ENCODE measurements at regions of chr6 and their contacts with region 1.

Region 1: DNA sequence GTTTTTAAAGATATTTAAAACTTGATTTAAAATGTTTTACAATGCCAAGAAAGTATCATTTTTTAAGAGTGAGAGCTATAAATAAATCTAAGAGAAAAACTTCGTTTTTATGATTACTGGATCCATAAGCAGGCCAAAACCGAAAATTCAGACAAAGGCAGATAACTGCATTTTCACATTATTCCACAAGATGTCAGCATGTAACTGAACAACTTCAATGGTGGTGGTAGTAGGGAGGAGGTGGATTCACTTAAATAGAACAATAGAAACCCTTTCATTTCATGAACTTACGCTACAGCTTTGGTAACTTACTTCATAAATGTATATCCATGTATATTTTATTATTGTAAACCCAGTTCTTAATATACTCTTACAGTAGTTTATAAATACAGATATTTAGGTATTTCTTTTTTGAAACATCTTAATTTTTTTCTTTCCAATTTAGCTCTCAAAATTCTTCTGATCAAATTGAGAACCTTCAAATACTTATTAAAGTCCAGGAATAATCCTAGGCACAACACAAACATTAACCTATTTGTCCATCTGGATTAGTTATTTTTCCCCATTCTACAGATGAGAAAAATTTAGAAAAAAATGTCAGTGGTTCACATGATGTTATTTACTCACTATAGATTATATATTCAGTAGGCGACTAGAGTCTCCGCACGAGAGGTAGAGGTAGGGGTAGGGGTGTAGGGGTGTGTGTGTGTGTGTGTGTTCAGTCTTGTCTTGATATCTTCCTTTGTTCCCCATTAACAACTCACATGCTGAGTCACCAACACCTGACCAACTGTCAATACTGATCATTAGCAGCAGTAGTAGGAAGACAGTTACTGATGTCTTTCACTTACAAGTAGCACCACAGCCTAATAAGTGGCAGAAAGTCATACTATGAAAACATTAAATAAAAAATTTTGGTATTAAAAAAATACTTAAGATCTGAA is 111.5 kb downstream of the ARHGAP18 start:
- DNase-seq: peak in 4 of 14 experiments; percentile 8 to 84 (median 80)
- ATAC-seq: peak; percentile 98
- H3K4me3 ChIP-seq: no peak overlapping the region
- H3K4me3 Mint-ChIP-seq: no peak overlapping the region
- H3K27ac ChIP-seq: no peak overlapping the region
- H3K27ac Mint-ChIP-seq: no peak overlapping the region
- H3K4me1 ChIP-seq: no peaks in the 10 kb centered on the region
- H3K4me1 Mint-ChIP-seq: no peaks in the 10 kb centered on the region
- H3K27me3 ChIP-seq: no peaks in the 10 kb centered on the region
- H3K27me3 Mint-ChIP-seq: no peaks in the 10 kb centered on the region
- CTCF ChIP-seq: peak; percentile 90

Region 2: GRCh38 chr6:129730477-129731165 is 132.1 kb after region 1 on chr6:
- CTCF ChIA-PET with region 1: interaction called, 55 read pairs
- POLR2A ChIA-PET with region 1: interaction called, 11 read pairs
- intact Hi-C with region 1: loop called (anchors 1 kb)
- DNase-seq: peak in 7 of 14 experiments; percentile 7 to 73 (median 54)
- ATAC-seq: peak; percentile 60
- H3K4me3 ChIP-seq: no peak overlapping the region
- H3K4me3 Mint-ChIP-seq: no peak overlapping the region
- H3K27ac ChIP-seq: no peak overlapping the region
- H3K27ac Mint-ChIP-seq: no peak overlapping the region
- H3K4me1 ChIP-seq: no peaks in the 10 kb centered on the region
- H3K4me1 Mint-ChIP-seq: peaks cover 14% of the 10 kb centered on the region
- H3K27me3 ChIP-seq: no peaks in the 10 kb centered on the region
- H3K27me3 Mint-ChIP-seq: no peaks in the 10 kb centered on the region
- CTCF ChIP-seq: peak; percentile 83

Region 3: DNA sequence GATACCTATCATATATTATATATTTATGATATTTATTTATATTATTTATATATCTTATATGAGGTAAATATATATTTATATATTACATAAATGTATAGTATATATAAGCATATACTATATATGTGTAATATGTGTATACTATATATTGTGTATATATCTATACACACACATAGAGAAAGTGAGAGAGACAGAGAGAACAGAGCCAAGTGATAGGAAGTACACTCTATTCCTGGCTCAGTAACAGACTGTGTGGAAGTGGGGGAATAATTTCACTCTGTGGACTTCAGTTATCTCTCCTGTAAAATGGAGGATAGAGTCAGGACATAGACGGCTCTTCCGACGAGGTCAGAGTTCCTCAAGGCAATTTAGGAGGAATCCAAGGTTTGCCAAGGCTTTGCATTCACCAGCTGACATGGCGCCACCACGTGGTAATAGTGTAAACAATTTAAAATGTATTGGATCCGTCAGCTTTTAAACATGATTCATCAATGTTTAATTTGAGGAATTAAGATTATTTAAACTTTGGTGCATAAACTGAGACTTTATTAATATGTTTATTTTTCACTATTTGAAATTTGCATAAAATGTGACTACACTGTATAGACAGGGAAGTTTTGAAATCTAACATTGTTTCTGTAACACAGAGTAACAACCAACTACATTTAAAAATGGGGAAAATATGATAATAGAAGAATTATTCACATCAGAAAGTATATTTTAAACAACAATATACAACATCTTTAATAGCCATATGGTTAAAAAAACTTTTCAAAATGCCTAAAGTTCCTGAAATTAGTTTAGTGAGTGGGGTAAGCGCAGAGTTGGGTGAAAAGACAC is 338.0 kb after region 1 on chr6:
- CTCF ChIA-PET with region 1: interaction called, 4 read pairs
- POLR2A ChIA-PET with region 1: no interaction called
- intact Hi-C with region 1: loop called (anchors 1 to 2 kb)
- DNase-seq: peak in 12 of 14 experiments; percentile 4 to 72 (median 25)
- ATAC-seq: no peak
- H3K4me3 ChIP-seq: no peak overlapping the region
- H3K4me3 Mint-ChIP-seq: no peak overlapping the region
- H3K27ac ChIP-seq: no peak overlapping the region
- H3K27ac Mint-ChIP-seq: no peak overlapping the region
- H3K4me1 ChIP-seq: no peaks in the 10 kb centered on the region
- H3K4me1 Mint-ChIP-seq: peaks cover 4% of the 10 kb centered on the region
- H3K27me3 ChIP-seq: peaks cover 0 to under 1% of the 10 kb centered on the region in 2 experiments
- H3K27me3 Mint-ChIP-seq: peaks cover 24% of the 10 kb centered on the region
- CTCF ChIP-seq: peak; percentile 88

Region 4: GRCh38 chr6:130708338-130708737 is 1109.8 kb after region 1 on chr6:
- CTCF ChIA-PET with region 1: no interaction called
- POLR2A ChIA-PET with region 1: no interaction called
- intact Hi-C with region 1: loop called in 1 of 2 experiments (anchors 10 kb)
- DNase-seq: peak in 1 of 14 experiments; percentile 10
- ATAC-seq: no peak
- H3K4me3 ChIP-seq: no peak overlapping the region
- H3K4me3 Mint-ChIP-seq: no peak overlapping the region
- H3K27ac ChIP-seq: no peak overlapping the region
- H3K27ac Mint-ChIP-seq: no peak overlapping the region
- H3K4me1 ChIP-seq: peaks cover 2% of the 10 kb centered on the region
- H3K4me1 Mint-ChIP-seq: no peaks in the 10 kb centered on the region
- H3K27me3 ChIP-seq: no peaks in the 10 kb centered on the region
- H3K27me3 Mint-ChIP-seq: no peaks in the 10 kb centered on the region
- CTCF ChIP-seq: no peak